ENCODE measurements at regions of chrX and their contacts with region 1.

Region 1: GRCh38 chrX:30635630-30636029 is 17.6 kb upstream of the GK start:
- DNase-seq: no peak
- H3K4me3 Mint-ChIP-seq: no peak overlapping the region
- H3K27ac Mint-ChIP-seq: no peak overlapping the region
- H3K4me1 Mint-ChIP-seq: peaks cover 2% of the 10 kb centered on the region
- H3K27me3 Mint-ChIP-seq: no peaks in the 10 kb centered on the region

Region 2: DNA sequence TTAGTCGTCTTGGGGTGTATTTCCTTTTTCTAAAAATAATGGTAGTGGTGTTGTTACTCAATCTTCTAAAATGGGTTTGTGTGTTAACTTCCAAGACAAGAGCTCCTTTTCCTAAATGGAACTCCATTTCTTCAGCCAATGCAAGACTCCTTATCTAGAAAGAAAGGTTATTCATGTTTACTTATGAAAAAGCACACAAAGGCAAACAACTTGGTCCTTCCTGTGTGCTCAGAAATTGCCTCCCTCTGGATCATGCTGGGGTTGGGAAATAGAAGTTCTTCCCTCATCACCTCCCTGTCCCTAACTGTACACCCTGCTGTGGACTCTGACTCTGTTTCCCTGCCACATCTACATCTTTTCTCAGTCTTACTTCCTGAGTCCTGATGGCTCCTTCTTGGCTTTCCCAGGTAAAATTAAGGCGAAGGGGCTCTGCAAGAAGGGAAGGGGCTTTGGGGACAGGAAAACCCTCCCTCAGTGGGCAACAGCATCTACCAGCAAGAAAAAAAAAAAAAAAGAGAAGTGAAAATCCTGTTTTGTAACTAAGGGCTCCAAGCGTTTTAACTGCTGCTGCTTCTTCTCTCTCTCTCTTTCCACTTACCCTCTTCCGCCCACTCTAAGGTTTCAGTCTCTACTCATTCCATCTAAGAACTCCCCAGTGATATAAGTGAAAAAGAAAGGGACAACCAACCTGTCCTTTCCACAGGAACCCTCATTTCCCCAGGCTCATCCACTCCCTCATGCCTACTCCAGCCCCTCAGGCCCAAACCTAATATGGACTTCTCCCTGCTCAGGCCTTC is 38.2 kb before region 1 on chrX:
- intact Hi-C with region 1: no loop called
- DNase-seq: no peak
- H3K4me3 Mint-ChIP-seq: peak overlapping the region; percentile 34
- H3K27ac Mint-ChIP-seq: peak overlapping the region; percentile 37
- H3K4me1 Mint-ChIP-seq: peaks cover 17% of the 10 kb centered on the region
- H3K27me3 Mint-ChIP-seq: no peaks in the 10 kb centered on the region

Region 3: DNA sequence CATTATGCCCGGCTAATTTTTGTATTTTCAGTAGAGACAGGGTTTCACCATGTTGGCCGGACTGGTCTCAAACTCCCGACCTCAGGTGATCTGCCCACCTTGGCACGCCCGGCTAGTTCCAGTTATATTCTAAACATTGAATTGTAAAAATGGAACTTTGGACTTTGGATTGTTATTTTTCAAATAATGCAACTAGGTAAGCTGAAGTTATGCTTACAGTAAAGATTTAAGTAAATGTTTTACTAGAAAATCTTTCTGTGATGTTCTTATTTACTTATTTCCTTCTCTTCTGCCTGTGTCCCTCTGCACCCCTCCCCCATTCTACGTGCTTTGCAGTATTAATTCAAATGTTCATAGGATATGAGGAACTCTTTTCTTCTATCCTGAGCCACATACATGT is 43.7 kb after region 1 on chrX:
- intact Hi-C with region 1: loop called (anchors 5 kb)
- DNase-seq: no peak
- H3K4me3 Mint-ChIP-seq: no peak overlapping the region
- H3K27ac Mint-ChIP-seq: no peak overlapping the region
- H3K4me1 Mint-ChIP-seq: peaks cover 26% of the 10 kb centered on the region
- H3K27me3 Mint-ChIP-seq: no peaks in the 10 kb centered on the region

Measured in activated T-helper 1 cell treated with anti-CD3 and anti-CD28 coated beads, Interleukin-12 subunit alpha, Interleukin-12 subunit beta, Interleukin-2, Interleukin-4 antibody, amounts not matched to agents 30 ng/mL and 10 ng/mL and 1 ng/mL, durations not matched to agents 14 hours and 24 hours and 36 hours (primary cell).